ENCODE measurements at regions of chr5 and their contacts with region 1.

Region 1: GRCh38 chr5:151686674-151687407 is at the start of gene SPARC:
- DNase-seq: peak; percentile 90
- H3K4me3 ChIP-seq: peak within 1 kb of the TSS; percentile 99
- H3K27ac ChIP-seq: peak within 1 kb of the TSS; percentile 94
- H3K27me3 ChIP-seq: no peaks in the 10 kb centered on the region
- CTCF ChIP-seq: 0 out of 2 replicates have a peak, but pooled peaks have one; percentile 16
- polyA plus RNA-seq, gene SPARC: 5,773 and 5,780 TPM in 2 replicates

Region 2: DNA sequence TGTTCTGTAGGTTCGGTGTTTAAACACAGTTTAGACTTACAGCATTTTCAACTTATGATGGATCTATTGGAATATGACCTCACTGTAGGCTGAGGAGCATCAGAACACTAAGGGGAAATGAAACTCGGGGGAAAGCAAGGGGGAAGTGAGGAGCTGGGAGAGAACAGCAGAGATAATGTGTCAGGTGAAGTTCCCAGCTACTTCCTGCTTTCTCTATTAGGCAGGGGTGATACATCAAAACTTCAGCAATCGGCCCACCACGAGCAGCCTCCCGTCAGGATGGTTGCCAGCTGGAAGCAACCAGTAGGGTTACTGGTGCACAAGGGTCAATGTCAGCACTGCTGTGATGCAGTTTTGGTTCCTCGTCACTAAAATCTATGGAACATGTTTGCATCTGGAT is 130.0 kb before region 1 on chr5:
- CTCF ChIA-PET with region 1: no interaction called
- POLR2A ChIA-PET with region 1: no interaction called
- DNase-seq: no peak
- H3K4me3 ChIP-seq: no peak overlapping the region
- H3K27ac ChIP-seq: no peak overlapping the region
- H3K27me3 ChIP-seq: peaks cover 15% of the 10 kb centered on the region
- CTCF ChIP-seq: no peak

Region 3: GRCh38 chr5:151637676-151638075 is 49.2 kb before region 1 on chr5:
- CTCF ChIA-PET with region 1: no interaction called
- POLR2A ChIA-PET with region 1: no interaction called
- DNase-seq: no peak
- H3K4me3 ChIP-seq: no peak overlapping the region
- H3K27ac ChIP-seq: no peak overlapping the region
- H3K27me3 ChIP-seq: peaks cover 20% of the 10 kb centered on the region
- CTCF ChIP-seq: no peak

Region 4: DNA sequence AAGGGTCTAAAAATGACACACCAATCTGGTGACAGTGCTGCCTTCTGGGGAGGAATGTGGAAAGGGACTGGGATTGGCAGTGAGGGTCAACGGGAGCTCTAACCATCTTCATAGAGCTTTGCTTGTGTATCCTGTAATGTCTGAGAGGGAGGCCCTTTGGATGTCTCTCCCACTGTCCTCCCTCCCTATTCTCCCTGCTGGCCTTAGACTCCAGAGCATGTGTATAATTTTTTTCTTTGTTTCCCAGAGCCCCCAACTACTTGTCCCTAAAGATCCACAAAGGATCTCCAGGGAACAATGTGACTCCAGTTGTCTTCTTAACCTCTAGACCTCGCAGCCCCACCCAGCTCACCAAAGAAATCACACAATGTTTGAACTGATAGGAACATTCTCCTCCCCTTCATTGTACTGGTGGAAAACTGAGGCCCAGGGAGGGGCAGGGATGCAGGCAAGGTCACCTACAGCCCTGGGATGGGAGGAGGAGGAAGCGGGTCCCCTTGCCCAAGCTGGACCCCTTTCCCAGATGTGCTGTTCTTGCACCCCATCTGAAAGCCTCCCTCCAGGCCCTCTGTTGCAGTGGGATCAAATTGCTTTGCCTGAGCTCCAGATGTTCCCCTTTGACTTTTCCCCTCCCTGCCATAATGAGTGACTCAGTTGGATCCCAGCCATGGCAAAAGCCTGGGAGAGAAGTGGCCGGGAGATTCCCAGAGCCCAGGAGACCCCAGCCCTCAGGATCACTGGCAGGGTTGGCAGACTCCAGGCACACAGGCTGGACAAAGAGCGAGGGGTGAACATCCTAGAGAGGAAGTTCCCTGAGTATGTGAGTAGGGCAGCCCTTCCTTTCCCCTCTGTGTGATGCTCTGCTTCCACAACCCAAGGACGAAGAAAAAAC is 21.9 kb before region 1 on chr5:
- CTCF ChIA-PET with region 1: interaction called, 14 read pairs
- POLR2A ChIA-PET with region 1: interaction called, 81 read pairs
- DNase-seq: no peak
- H3K4me3 ChIP-seq: no peak overlapping the region
- H3K27ac ChIP-seq: peak overlapping the region; percentile 92
- H3K27me3 ChIP-seq: no peaks in the 10 kb centered on the region
- CTCF ChIP-seq: no peak

Region 5: DNA sequence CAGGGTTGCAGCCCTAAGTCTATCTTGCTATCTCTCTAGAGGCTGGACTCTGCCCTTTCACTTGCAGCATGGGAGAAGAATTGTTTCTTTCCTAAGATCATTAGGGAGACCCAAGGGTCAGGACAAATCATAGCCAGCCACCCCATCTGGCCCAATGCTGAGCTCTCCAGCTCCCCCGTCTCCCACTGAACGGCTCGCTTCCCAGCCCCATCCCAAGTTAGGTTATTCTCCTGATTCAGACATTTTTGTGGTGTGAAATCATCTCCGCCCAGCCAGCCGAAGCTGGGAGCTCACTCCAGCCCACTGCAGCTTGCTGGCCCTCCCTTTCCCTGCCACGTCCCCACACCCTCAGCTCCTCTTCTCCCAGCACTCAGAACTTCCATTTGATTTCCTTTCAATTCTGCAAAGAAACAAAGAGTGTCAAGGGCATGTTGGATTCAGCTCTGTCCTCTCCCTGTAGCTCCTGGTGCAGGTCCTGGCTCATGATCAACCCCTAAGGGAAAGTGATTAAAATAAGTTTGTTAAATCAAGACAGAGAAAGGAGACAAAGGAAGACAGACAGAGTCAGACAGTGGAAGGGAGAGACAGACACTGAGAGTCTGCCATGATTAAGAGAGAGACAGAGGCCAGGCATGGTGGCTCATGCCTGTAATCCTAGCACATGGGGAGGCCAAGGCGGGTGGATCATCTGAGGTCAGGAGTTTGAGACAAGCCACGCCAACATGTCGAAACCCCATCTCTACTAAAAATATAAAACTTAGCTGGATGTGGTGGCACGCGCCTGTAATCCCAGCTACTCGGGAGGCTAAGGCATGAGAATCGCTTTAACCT is 12.4 kb after region 1 on chr5:
- CTCF ChIA-PET with region 1: interaction called, 18 read pairs
- POLR2A ChIA-PET with region 1: interaction called, 272 read pairs
- DNase-seq: peak; percentile 97
- H3K4me3 ChIP-seq: no peak overlapping the region
- H3K27ac ChIP-seq: peak overlapping the region; percentile 100
- H3K27me3 ChIP-seq: no peaks in the 10 kb centered on the region
- CTCF ChIP-seq: no peak

Region 6: DNA sequence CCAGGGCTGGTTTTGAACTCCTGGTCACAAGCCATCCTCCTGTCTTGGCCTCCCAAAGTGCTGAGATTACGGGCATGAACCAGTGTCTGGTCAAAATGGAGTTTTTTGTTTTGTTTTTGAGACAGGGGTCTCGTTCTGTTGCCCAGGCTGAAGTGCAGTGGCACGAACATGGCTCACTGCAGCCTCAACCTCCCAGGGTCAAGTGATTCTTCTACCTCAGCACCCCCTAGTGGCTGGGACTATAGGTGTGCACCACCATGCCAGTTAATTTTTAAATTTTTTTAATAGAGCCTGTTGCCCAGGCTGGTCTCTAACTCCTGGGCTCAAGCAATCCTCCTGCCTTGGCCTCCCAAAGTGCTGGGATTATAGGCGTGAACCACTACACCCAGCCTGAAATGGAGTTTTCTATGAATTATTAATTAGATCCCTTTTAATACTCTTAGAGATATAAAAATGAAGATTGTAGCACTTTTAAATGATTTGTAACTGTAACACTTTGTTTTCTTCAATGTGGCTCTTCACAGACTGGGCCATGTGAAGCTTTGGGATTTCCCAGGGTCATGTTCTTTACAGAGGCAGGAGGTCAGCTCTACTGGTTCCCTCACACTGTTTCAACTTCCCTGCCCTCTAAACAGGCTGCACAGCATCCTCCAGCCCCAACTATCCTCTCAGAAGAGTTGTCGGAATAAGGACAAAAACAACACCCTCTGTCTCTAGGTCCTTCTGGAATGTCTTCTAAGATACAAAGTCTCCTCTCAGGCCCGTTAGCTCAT is 32.6 kb after region 1 on chr5:
- CTCF ChIA-PET with region 1: interaction called, 7 read pairs
- POLR2A ChIA-PET with region 1: interaction called, 25 read pairs
- DNase-seq: no peak
- H3K4me3 ChIP-seq: no peak overlapping the region
- H3K27ac ChIP-seq: peak overlapping the region; percentile 85
- H3K27me3 ChIP-seq: no peaks in the 10 kb centered on the region
- CTCF ChIP-seq: peak; percentile 48

Region 7: GRCh38 chr5:151771259-151772028 is 84.6 kb after region 1 on chr5 and contains the start of gene G3BP1:
- CTCF ChIA-PET with region 1: interaction called, 4 read pairs
- POLR2A ChIA-PET with region 1: interaction called, 28 read pairs
- DNase-seq: peak; percentile 100
- H3K4me3 ChIP-seq: peak within 1 kb of the TSS; percentile 91
- H3K27ac ChIP-seq: peak within 1 kb of the TSS; percentile 95
- H3K27me3 ChIP-seq: no peaks in the 10 kb centered on the region
- CTCF ChIP-seq: peak; percentile 68
- polyA plus RNA-seq, gene G3BP1: 87.7 and 101 TPM in 2 replicates